Naive thymus-derived CD8-positive, alpha-beta T cell (primary cell): ENCODE measurements at regions of chr16 and their contacts with region 1.

Region 1: DNA sequence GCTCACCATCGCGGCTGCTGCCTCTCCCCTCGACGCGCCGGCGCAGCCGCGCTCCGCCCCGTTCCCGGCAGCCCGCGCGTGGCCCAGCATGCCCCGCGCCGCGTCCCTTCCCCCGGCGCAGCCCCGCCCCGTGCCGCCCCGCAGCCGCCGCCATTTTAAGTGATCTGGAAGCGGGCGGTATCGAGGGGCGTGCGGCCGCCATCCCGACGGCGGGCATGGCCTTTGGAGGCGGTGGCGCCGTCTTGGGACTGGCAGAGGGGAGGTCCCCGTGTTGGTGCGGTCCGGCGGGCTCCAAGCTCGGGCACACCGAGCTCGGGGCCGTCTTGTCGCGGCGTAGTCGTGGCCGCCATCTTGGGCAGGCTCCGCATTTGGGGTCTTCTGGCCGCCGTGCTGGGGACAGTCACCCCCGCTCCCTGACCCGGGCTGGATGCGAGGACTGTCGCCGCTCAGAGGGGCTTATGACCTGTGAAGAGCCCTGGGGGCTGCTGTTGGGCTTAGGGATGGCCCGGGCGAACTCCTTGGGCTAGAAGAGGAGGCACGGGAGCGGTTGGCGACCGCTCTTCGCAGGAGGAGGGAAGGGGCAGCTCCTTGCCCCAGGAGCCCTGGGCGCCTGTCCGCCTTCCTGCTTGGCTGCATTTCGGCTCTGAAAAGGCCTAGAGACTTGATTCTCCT is at the start of gene ELOB:
- DNase-seq: peak; percentile 81 to 93 (median 88)
- ATAC-seq: peak; percentile 82 to 89
- H3K4me3 Mint-ChIP-seq: peak within 1 kb of the TSS; percentile 89 to 97 (median 96)
- H3K27ac Mint-ChIP-seq: peak within 1 kb of the TSS; percentile 96 to 99 (median 99)
- H3K4me1 Mint-ChIP-seq: peaks cover 23 to 58% (median 48%) of the 10 kb centered on the region in 4 donors
- H3K27me3 Mint-ChIP-seq: no peaks in the 10 kb centered on the region
- polyA plus RNA-seq, gene ELOB: 230 to 301 (median 288) TPM

Region 2: GRCh38 chr16:2531767-2532493 is 245.4 kb before region 1 on chr16:
- POLR2A ChIA-PET with region 1: interaction called, 11 read pairs
- DNase-seq: peak; percentile 89 to 98 (median 96)
- ATAC-seq: peak; percentile 85 to 89
- H3K4me3 Mint-ChIP-seq: peak overlapping the region; percentile 92 to 100 (median 96)
- H3K27ac Mint-ChIP-seq: peak overlapping the region; percentile 92 to 100 (median 99)
- H3K4me1 Mint-ChIP-seq: peaks cover 9 to 34% (median 23%) of the 10 kb centered on the region in 4 donors
- H3K27me3 Mint-ChIP-seq: peaks cover 0 to 3% (median 0%) of the 10 kb centered on the region in 5 donors

Region 3: GRCh38 chr16:2682209-2683021 is 95.0 kb before region 1 on chr16 and contains the start of gene KCTD5:
- POLR2A ChIA-PET with region 1: interaction called, 10 read pairs
- DNase-seq: peak; percentile 88 to 97 (median 94)
- ATAC-seq: peak; percentile 95 to 97
- H3K4me3 Mint-ChIP-seq: peak within 1 kb of the TSS; percentile 88 to 98 (median 95)
- H3K27ac Mint-ChIP-seq: peak within 1 kb of the TSS; percentile 88 to 97 (median 96)
- H3K4me1 Mint-ChIP-seq: peaks cover 12 to 32% (median 23%) of the 10 kb centered on the region in 4 donors
- H3K27me3 Mint-ChIP-seq: no peaks in the 10 kb centered on the region
- polyA plus RNA-seq, gene KCTD5: 10.8 to 18.4 (median 12.9) TPM

Region 4: GRCh38 chr16:2710711-2711231 is 66.6 kb before region 1 on chr16:
- POLR2A ChIA-PET with region 1: no interaction called
- DNase-seq: no peak
- ATAC-seq: no peak
- H3K4me3 Mint-ChIP-seq: no peak overlapping the region
- H3K27ac Mint-ChIP-seq: peak overlapping the region in 1 of 10 donors; percentile 40
- H3K4me1 Mint-ChIP-seq: peaks cover 2 to 11% (median 9%) of the 10 kb centered on the region in 4 donors
- H3K27me3 Mint-ChIP-seq: peaks cover 0 to 5% (median 0%) of the 10 kb centered on the region in 5 donors

Region 5: GRCh38 chr16:2752035-2752849 is 25.1 kb before region 1 on chr16 and contains the start of gene SRRM2:
- POLR2A ChIA-PET with region 1: interaction called, 128 read pairs
- DNase-seq: peak; percentile 89 to 99 (median 94)
- ATAC-seq: peak; percentile 85 to 89
- H3K4me3 Mint-ChIP-seq: peak within 1 kb of the TSS; percentile 81 to 97 (median 92)
- H3K27ac Mint-ChIP-seq: peak within 1 kb of the TSS; percentile 98 to 99 (median 99)
- H3K4me1 Mint-ChIP-seq: peaks cover 36 to 50% (median 45%) of the 10 kb centered on the region in 4 donors
- H3K27me3 Mint-ChIP-seq: no peaks in the 10 kb centered on the region
- polyA plus RNA-seq, gene SRRM2: 25.5 to 110 (median 62.4) TPM

Region 6: GRCh38 chr16:2867987-2868789 is 90.8 kb after region 1 on chr16:
- POLR2A ChIA-PET with region 1: interaction called, 12 read pairs
- DNase-seq: peak; percentile 91 to 96 (median 93)
- ATAC-seq: peak; percentile 94 to 95
- H3K4me3 Mint-ChIP-seq: peak overlapping the region; percentile 82 to 90 (median 86)
- H3K27ac Mint-ChIP-seq: peak overlapping the region; percentile 74 to 93 (median 87)
- H3K4me1 Mint-ChIP-seq: peaks cover 6 to 26% (median 19%) of the 10 kb centered on the region in 4 donors
- H3K27me3 Mint-ChIP-seq: peaks cover 0 to 2% (median 0%) of the 10 kb centered on the region in 5 donors